ENCODE measurements at regions of chr1 and their contacts with region 1.

Region 1: DNA sequence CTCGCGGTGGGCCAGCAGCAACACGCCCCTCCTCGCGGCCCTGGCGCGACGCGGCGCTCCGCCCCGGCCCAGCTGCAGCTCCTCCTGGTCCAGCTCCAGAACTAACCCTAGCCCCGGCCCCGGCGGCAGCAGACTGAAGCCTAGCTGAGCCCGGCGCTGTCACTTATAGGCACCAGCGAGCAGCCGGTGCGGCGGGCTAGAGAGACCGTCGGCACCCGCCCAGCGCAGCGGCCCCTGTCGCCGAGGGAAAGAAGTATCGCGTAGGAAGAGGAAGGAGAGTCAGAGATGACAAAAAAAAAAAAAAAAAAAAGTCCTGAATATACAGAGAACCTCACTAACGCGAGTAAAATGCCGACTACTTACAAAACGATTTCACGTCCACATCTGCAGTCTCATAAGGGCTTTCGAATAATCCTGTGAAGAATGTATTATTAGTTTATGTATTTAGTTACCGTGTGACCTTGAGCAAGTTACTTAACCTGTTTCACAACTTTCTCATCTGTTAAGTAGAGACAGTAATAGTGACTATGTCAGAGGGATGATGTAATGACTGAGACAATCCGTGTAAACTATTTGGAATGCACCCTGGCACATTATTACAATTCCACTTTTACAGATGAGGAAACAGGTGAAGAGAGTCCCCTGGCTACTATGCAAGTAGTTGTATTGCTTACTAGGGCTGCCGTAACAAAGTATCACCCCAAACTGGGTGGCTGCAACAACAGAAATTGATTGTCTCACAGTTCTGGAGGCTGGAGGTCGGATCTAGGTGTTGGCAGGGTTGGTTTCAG is at the start of gene SLC9A1:
- DNase-seq: peak; percentile 93
- H3K4me3 Mint-ChIP-seq: peak within 1 kb of the TSS; percentile 83
- H3K27ac Mint-ChIP-seq: peak within 1 kb of the TSS; percentile 97
- H3K4me1 Mint-ChIP-seq: peaks cover 42% of the 10 kb centered on the region
- H3K27me3 Mint-ChIP-seq: no peaks in the 10 kb centered on the region
- total RNA-seq, gene SLC9A1: 16.0 to 17.8 TPM

Region 2: GRCh38 chr1:27102707-27103491 is 52.3 kb before region 1 on chr1:
- CTCF ChIA-PET with region 1: interaction called, 10 read pairs
- POLR2A ChIA-PET with region 1: interaction called, 5 read pairs
- intact Hi-C with region 1: no loop called
- DNase-seq: peak; percentile 87
- H3K4me3 Mint-ChIP-seq: no peak overlapping the region
- H3K27ac Mint-ChIP-seq: no peak overlapping the region
- H3K4me1 Mint-ChIP-seq: peaks cover 15% of the 10 kb centered on the region
- H3K27me3 Mint-ChIP-seq: no peaks in the 10 kb centered on the region

Region 3: GRCh38 chr1:27111626-27112573 is 43.3 kb before region 1 on chr1:
- CTCF ChIA-PET with region 1: interaction called, 18 read pairs
- POLR2A ChIA-PET with region 1: interaction called, 22 read pairs
- intact Hi-C with region 1: loop called (anchors 1 kb)
- DNase-seq: peak; percentile 89
- H3K4me3 Mint-ChIP-seq: no peak overlapping the region
- H3K27ac Mint-ChIP-seq: peak overlapping the region; percentile 83
- H3K4me1 Mint-ChIP-seq: peaks cover 40% of the 10 kb centered on the region
- H3K27me3 Mint-ChIP-seq: no peaks in the 10 kb centered on the region

Region 4: GRCh38 chr1:27136998-27137542 is 18.1 kb before region 1 on chr1:
- CTCF ChIA-PET with region 1: interaction called, 9 read pairs
- POLR2A ChIA-PET with region 1: interaction called, 97 read pairs
- intact Hi-C with region 1: loop called (anchors 2 kb)
- DNase-seq: peak; percentile 92
- H3K4me3 Mint-ChIP-seq: peak overlapping the region; percentile 91
- H3K27ac Mint-ChIP-seq: peak overlapping the region; percentile 99
- H3K4me1 Mint-ChIP-seq: peaks cover 40% of the 10 kb centered on the region
- H3K27me3 Mint-ChIP-seq: no peaks in the 10 kb centered on the region

Region 5: DNA sequence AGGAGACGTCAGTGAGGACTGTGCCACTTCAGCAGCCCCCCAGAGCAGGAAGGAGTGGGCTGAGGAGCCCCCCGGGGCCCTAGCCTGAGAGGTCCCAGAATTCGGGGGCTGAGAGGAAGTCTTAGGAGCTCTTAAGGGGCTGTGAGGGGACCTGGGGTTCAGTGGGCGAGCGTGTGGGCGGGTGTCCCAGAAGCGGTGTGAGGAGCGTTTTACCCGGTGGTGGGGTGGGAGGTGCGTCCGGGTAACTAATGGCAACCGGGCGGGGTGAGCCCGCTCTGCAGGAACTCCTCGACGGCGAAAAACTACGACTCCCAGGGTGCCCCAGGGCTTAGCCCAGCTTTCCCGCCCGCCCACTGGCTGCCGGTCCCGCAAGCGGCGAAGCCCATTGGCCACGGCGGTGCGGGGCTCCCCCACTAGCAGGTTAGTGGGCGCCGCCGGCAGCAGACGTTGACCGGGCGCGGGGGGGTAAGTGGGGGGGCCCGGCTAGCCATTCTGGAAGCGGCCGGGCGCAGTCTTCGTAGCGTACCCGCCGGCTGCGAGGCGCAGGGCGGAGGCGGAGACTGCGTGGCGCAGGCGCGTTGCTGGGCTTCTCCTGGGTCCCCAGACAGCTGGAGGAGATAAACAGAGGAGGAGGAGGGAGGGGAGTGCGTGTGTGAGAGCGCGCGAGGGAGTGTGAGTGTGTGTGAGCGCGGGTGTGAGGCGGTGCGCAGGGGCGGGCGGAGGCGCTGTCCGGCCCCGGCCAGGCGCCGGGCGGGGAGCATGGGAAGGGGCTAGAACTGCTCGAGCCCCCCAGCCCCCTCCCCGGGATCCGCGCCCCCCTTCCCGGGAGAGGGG is 79.1 kb after region 1 on chr1 and contains the start of gene WDTC1:
- CTCF ChIA-PET with region 1: no interaction called
- POLR2A ChIA-PET with region 1: interaction called, 4 read pairs
- intact Hi-C with region 1: loop called (anchors 1 kb)
- DNase-seq: peak; percentile 99
- H3K4me3 Mint-ChIP-seq: peak within 1 kb of the TSS; percentile 91
- H3K27ac Mint-ChIP-seq: peak within 1 kb of the TSS; percentile 86
- H3K4me1 Mint-ChIP-seq: peaks cover 29% of the 10 kb centered on the region
- H3K27me3 Mint-ChIP-seq: no peaks in the 10 kb centered on the region
- total RNA-seq, gene WDTC1: 30.3 TPM

Region 6: DNA sequence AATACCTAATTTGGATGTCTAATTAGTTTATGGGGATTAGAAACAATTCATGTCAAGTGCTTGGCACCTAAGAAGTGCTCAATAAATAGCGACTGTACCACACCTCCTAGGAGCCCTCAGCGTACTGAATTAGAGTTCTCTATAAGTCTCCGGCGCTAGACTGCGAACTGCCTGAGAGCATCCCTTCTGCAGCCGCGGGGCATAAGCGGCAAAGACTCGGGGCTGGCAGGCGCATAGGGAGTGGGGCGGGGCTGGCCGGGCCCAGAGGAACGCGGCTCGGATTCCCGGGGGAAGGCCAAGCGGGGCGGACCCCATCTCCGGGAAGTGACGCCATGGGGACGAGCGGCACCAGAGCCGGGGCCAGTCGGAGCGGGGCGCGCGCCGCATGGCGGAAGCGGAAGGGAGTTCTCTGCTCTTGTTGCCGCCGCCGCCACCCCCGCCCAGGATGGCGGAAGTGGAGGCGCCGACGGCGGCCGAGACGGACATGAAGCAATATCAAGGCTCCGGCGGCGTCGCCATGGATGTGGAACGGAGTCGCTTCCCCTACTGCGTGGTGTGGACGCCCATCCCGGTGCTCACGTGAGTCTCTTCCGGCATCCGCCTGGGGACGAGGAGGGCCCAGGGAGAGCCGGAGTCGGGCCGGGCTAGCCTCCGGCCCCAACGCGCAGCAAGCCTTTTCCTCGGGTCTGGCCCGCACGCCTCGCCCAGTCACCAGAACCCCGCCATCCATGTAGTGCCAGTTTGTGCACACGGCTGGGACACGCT is 166.8 kb after region 1 on chr1 and contains the start of gene TMEM222:
- CTCF ChIA-PET with region 1: interaction called, 3 read pairs
- POLR2A ChIA-PET with region 1: no interaction called
- intact Hi-C with region 1: loop called (anchors 1 kb)
- DNase-seq: peak; percentile 98
- H3K4me3 Mint-ChIP-seq: peak within 1 kb of the TSS; percentile 96
- H3K27ac Mint-ChIP-seq: peak within 1 kb of the TSS; percentile 82
- H3K4me1 Mint-ChIP-seq: peaks cover 41% of the 10 kb centered on the region
- H3K27me3 Mint-ChIP-seq: no peaks in the 10 kb centered on the region
- total RNA-seq, gene TMEM222: 22.8 to 24.6 TPM